CD4-positive, alpha-beta T cell (primary cell): ENCODE measurements at regions of chr16 and their contacts with region 1.

Region 1: DNA sequence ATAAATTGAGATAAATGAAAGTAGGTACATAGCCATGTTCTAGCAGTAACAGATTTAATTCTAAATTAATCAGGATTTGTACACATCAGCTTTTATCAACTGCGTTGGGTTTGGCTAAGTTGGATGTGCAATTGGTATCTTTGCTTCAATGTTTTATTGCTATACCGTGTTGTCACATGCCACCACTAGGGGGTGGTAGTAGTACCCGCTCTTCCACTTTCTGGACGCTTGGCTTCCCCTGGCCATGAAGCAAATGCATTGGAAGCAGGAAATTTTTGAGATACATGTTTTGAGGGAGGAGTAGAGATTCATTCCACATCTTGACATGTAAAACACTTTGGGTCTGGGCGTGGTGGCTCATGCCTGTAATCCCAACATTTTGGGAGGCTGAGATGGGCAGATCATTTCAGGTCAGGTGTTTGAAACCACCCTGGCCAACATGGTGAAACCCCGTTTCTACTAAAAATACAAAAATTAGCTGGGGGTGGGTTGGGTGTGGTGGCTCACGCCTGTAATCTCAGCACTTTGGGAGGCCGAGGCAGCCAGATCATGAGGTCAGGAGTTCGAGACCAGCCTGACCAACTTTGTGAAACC is 58.6 kb downstream of the EMP2 start:
- DNase-seq: peak in 9 of 14 experiments; percentile 3 to 71 (median 32)
- ATAC-seq: no peak
- H3K4me3 ChIP-seq: no peak overlapping the region
- H3K4me3 Mint-ChIP-seq: no peak overlapping the region
- H3K27ac ChIP-seq: no peak overlapping the region
- H3K27ac Mint-ChIP-seq: no peak overlapping the region
- H3K4me1 ChIP-seq: peaks cover 2% of the 10 kb centered on the region
- H3K4me1 Mint-ChIP-seq: peaks cover 5% of the 10 kb centered on the region
- H3K27me3 ChIP-seq: no peaks in the 10 kb centered on the region
- H3K27me3 Mint-ChIP-seq: peaks cover 5% of the 10 kb centered on the region
- CTCF ChIP-seq: peak; percentile 69

Region 2: DNA sequence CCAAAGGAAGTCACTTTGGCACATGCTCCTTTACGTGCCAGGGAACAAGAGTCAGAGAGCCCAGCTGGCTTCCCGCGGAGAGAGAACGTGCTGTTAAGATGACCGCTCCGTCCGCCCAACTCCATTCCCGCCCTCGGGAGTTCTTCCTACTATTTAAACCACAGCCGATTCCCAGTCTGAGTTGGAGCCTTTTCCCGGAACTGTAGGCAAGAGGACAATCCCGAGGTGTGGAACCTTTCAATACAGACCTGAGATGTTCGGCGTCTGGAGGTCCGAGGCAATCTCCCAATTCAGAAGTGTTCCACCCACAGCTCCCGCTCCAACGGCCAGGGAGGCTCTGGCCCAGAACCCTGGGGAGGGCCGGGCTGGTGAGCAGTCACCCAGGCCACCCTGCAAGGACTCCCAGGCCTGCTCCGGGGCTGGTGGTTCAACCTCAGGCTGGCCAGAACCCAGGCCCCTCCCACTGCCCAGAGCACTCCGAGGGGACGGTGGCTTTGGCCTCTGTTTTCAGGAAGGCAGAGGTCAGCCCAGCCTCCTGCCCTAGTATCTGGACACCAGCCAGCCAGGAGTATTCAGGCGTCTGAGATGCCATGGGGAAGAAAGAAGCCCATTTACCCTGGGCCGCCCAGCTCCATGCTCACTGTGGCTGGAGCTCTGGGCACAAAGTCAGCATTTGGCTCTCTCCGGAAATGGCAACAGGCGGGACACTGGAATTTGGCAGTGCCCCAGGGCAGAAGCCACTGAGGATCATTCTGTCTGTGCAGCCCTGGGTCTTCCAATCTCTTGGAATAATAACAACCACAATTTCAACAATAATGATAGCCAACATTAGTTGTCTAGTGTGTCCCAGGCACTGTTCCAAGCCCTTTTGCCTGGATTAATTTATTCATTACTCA is 37.2 kb after region 1 on chr16:
- CTCF ChIA-PET with region 1: no interaction called
- POLR2A ChIA-PET with region 1: no interaction called
- intact Hi-C with region 1: no loop called
- DNase-seq: no peak
- ATAC-seq: no peak
- H3K4me3 ChIP-seq: no peak overlapping the region
- H3K4me3 Mint-ChIP-seq: no peak overlapping the region
- H3K27ac ChIP-seq: no peak overlapping the region
- H3K27ac Mint-ChIP-seq: no peak overlapping the region
- H3K4me1 ChIP-seq: no peaks in the 10 kb centered on the region
- H3K4me1 Mint-ChIP-seq: no peaks in the 10 kb centered on the region
- H3K27me3 ChIP-seq: peaks cover 3 to 7% of the 10 kb centered on the region in 2 experiments
- H3K27me3 Mint-ChIP-seq: peaks cover 30% of the 10 kb centered on the region
- CTCF ChIP-seq: no peak

Region 3: GRCh38 chr16:10918294-10919002 is 396.7 kb after region 1 on chr16:
- CTCF ChIA-PET with region 1: no interaction called
- POLR2A ChIA-PET with region 1: no interaction called
- intact Hi-C with region 1: loop called in 1 of 2 experiments (anchors 5 kb)
- DNase-seq: peak; percentile 55 to 87 (median 71)
- ATAC-seq: peak; percentile 56
- H3K4me3 ChIP-seq: no peak overlapping the region
- H3K4me3 Mint-ChIP-seq: no peak overlapping the region
- H3K27ac ChIP-seq: no peak overlapping the region
- H3K27ac Mint-ChIP-seq: no peak overlapping the region
- H3K4me1 ChIP-seq: peaks cover 7% of the 10 kb centered on the region
- H3K4me1 Mint-ChIP-seq: peaks cover 4% of the 10 kb centered on the region
- H3K27me3 ChIP-seq: no peaks in the 10 kb centered on the region
- H3K27me3 Mint-ChIP-seq: no peaks in the 10 kb centered on the region
- CTCF ChIP-seq: peak; percentile 83